K562 (cell line): ENCODE measurements at regions of chr13 and their contacts with region 1.

Region 1: GRCh38 chr13:109786457-109787134 is at the start of gene IRS2:
- DNase-seq: peak; percentile 86 to 91 (median 88)
- ATAC-seq: peak; percentile 86
- H3K4me3 ChIP-seq: peak within 1 kb of the TSS; percentile 70
- H3K27ac ChIP-seq: peak within 1 kb of the TSS; percentile 82
- H3K4me1 ChIP-seq: peaks cover 7 to 26% of the 10 kb centered on the region in 2 experiments; a peak in 3 of 5 replicates
- H3K27me3 ChIP-seq: no peaks in the 10 kb centered on the region
- CTCF ChIP-seq: no peak
- EP300 ChIP-seq: no peak
- POLR2A ChIP-seq: no peak
- RAD21 ChIP-seq: no peak
- polyA plus RNA-seq, gene IRS2: 0.53 to 0.63 TPM

Region 2: DNA sequence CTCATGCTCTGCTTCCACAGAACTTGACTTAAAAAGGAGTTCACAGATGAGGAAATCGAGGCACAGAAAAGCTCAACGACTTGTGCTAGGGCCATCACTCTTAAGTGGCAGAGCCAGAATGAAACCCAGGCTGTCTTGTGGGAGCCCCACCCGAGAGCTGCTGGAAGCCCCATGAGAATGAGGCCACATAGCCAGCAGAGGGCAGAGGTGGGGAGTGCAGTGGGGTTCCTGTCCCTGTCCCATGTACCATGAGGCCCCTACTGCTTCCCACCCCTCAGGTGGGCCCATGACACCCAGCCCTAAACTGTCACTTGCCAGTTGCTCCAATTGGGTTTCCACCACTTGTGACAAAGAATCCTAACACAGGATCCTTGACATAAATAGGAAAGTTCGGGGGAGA is 176.1 kb before region 1 on chr13:
- CTCF ChIA-PET with region 1: no interaction called
- POLR2A ChIA-PET with region 1: no interaction called
- in situ Hi-C with region 1: no loop called
- intact Hi-C with region 1: loop called (anchors 1 kb)
- DNase-seq: peak in 3 of 4 experiments; percentile 5 to 13 (median 12)
- ATAC-seq: peak; percentile 85
- H3K4me3 ChIP-seq: no peak overlapping the region
- H3K27ac ChIP-seq: no peak overlapping the region
- H3K4me1 ChIP-seq: no peaks in the 10 kb centered on the region
- H3K27me3 ChIP-seq: no peaks in the 10 kb centered on the region
- CTCF ChIP-seq: peak; percentile 28 to 43 (median 33); a peak in 4 of 6 replicates
- EP300 ChIP-seq: no peak
- POLR2A ChIP-seq: no peak
- RAD21 ChIP-seq: peak; percentile 49 to 51

Region 3: DNA sequence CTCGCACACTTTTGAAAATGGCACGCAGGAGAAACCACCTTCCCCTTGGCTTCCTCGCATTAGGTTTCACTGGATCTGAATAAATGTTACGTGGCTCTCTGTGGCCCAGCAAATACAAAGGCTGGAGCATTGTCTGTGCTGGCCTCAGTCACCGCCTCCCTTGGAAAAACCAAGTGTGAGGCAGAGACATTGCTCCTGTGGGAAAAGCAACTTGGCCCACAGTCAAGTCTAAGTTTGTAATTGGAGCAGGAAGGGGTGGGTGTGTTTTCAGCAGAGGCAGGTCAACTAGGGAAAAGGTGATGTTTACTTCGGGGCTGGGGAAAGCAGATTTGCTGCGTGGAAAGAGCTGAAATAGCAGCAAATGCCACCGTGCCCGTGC is 101.8 kb before region 1 on chr13:
- CTCF ChIA-PET with region 1: no interaction called
- POLR2A ChIA-PET with region 1: interaction called, 3 read pairs
- in situ Hi-C with region 1: no loop called
- intact Hi-C with region 1: loop called (anchors 5 kb)
- DNase-seq: no peak
- ATAC-seq: no peak
- H3K4me3 ChIP-seq: no peak overlapping the region
- H3K27ac ChIP-seq: no peak overlapping the region
- H3K4me1 ChIP-seq: peaks cover 0 to 1% of the 10 kb centered on the region in 2 experiments; a peak in 1 of 5 replicates
- H3K27me3 ChIP-seq: peaks cover 5 to 41% of the 10 kb centered on the region in 2 experiments; a peak in 3 of 5 replicates
- CTCF ChIP-seq: no peak
- EP300 ChIP-seq: no peak
- POLR2A ChIP-seq: no peak
- RAD21 ChIP-seq: no peak

Region 4: DNA sequence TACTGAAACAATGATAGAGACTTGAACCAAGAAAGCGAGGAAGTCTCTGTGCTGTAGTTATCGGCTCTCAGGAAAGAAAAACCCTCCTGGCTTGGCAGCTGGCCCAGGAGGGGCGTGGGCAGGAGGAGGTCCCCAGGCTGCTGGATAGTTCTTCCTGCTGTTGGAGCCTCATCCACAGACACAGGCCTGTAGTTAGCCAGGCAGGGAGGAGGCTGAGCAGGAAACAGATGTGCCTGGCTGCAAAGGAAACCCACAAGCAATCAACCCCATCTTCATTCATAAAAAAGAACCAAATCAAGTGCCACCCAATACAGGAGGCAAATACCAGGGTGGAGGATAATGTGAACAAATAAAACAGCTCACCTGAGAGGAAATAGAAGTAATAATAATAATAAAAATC is 86.4 kb before region 1 on chr13:
- CTCF ChIA-PET with region 1: no interaction called
- POLR2A ChIA-PET with region 1: interaction called, 4 read pairs
- in situ Hi-C with region 1: no loop called
- intact Hi-C with region 1: loop called (anchors 5 kb)
- DNase-seq: peak; percentile 25 to 88 (median 52)
- ATAC-seq: peak; percentile 93
- H3K4me3 ChIP-seq: no peak overlapping the region
- H3K27ac ChIP-seq: 0 out of 3 replicates have a peak overlapping the region, but pooled peaks have one; percentile 16
- H3K4me1 ChIP-seq: peaks cover 7 to 37% of the 10 kb centered on the region in 2 experiments; a peak in 4 of 5 replicates
- H3K27me3 ChIP-seq: no peaks in the 10 kb centered on the region
- CTCF ChIP-seq: no peak
- EP300 ChIP-seq: no peak; the same call in 1 of the 2 replicates
- POLR2A ChIP-seq: no peak
- RAD21 ChIP-seq: no peak